CD4-positive, alpha-beta memory T cell (primary cell): ENCODE measurements at regions of chr10 and their contacts with region 1.

Region 1: DNA sequence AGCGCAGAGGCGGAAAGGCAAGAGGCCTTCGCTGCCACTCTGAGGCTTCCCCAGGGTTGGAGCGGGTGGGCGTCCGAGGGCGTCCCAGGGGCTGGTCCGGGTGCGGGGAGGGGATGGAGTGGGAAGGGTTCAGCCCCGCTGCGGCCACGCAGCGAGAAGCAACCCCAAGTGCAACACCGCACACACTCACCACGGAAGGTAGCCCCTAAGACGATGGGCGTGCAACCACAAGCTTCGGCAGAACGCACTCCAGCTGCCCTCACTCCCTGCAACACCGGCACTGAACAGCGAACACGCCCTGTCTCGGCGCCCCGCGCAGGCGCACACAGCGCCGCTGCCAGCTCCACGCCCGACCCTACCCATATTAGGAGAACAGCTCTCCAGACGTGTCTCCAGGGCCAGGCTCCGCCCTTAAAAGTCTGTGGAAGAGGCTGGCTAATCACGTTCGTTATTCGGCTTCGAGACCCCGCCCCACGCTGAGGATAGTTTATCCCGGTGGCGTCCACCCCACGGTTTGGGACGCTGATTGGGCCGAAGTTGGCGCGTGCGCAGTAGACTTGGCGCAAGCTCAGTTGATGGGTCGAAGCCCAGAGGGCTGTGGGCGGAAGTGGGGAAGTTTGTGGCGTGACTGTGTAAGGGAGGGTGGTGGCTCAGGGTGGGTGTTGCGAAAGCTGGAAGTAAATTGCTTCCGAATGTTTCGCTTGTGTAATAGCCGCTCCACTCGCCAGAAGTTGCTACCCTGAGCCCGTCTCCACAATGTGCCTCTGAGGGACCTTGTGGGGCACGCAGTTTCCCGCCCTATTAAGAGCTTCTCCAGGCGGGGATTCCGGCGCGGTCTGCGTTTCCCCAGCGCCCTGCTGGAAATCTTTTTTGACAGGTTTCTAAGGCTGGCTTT is at the start of gene RSU1:
- DNase-seq: peak; percentile 100
- H3K4me3 ChIP-seq: peak within 1 kb of the TSS; percentile 58 to 70
- H3K4me3 Mint-ChIP-seq: peak within 1 kb of the TSS; percentile 95 to 99 (median 97)
- H3K27ac ChIP-seq: peak within 1 kb of the TSS; percentile 78
- H3K27ac Mint-ChIP-seq: peak within 1 kb of the TSS; percentile 88 to 98 (median 96)
- H3K4me1 ChIP-seq: peaks cover 37% of the 10 kb centered on the region
- H3K4me1 Mint-ChIP-seq: peaks cover 24 to 55% (median 35%) of the 10 kb centered on the region in 4 donors
- H3K27me3 ChIP-seq: no peaks in the 10 kb centered on the region
- H3K27me3 Mint-ChIP-seq: no peaks in the 10 kb centered on the region
- total RNA-seq, gene RSU1: 53.6 to 54.7 TPM

Region 2: DNA sequence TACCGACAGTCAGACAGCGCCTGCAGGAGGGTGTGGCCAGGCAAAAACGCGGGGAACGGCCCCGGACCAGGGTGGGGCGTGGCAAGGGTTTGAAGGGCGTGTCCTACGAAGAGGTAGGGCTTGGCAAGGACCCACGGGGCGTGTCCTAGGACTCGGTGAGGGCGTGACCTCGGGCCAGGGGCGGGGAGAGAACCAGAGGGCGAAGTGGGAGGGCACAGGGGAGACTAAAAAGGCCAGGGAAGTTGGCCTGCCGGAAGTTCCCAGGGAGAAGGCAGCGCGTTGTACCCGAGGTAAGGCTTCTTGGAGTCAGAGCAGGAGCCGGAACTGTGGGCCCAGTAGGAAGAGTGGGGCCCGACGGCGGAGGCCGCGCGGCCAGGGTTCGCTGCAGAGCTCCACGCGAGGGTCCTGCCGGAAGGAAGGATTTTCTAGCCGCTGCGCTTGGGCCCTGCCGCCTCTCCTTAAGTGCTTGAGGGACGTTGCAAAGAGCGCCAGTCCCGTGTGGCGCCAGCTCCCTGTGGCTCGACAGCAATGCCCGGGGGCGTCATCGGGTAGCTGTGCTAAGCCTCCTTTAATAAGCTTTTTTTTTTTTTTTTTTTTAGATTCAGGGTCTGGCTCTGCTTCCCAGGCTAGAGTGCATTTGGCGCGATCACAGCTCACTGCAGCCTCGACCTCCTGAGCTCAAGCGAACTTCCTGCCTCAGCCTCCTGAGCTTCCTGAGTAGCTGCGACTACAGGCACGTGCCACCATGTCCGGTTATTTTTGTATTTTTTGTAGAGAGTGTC is 380.4 kb before region 1 on chr10 and contains the start of gene PTER:
- CTCF ChIA-PET with region 1: interaction called, 4 read pairs
- POLR2A ChIA-PET with region 1: interaction called, 21 read pairs
- intact Hi-C with region 1: loop called (anchors 2 kb)
- DNase-seq: peak; percentile 94 to 96 (median 95)
- H3K4me3 ChIP-seq: peak within 1 kb of the TSS; percentile 63 to 65
- H3K4me3 Mint-ChIP-seq: peak within 1 kb of the TSS; percentile 88 to 97 (median 93)
- H3K27ac ChIP-seq: peak within 1 kb of the TSS; percentile 65
- H3K27ac Mint-ChIP-seq: peak within 1 kb of the TSS; percentile 85 to 96 (median 95)
- H3K4me1 ChIP-seq: peaks cover 52% of the 10 kb centered on the region
- H3K4me1 Mint-ChIP-seq: peaks cover 35 to 58% (median 48%) of the 10 kb centered on the region in 4 donors
- H3K27me3 ChIP-seq: no peaks in the 10 kb centered on the region
- H3K27me3 Mint-ChIP-seq: no peaks in the 10 kb centered on the region
- total RNA-seq, gene PTER: 24.1 to 26.5 TPM

Region 3: GRCh38 chr10:16828114-16828568 is 10.8 kb after region 1 on chr10:
- CTCF ChIA-PET with region 1: interaction called, 20 read pairs
- POLR2A ChIA-PET with region 1: interaction called, 6 read pairs
- intact Hi-C with region 1: no loop called
- DNase-seq: peak; percentile 67 to 73 (median 71)
- H3K4me3 ChIP-seq: no peak overlapping the region
- H3K4me3 Mint-ChIP-seq: no peak overlapping the region
- H3K27ac ChIP-seq: no peak overlapping the region
- H3K27ac Mint-ChIP-seq: peak overlapping the region in 5 of 7 donors; percentile 15 to 88 (median 68)
- H3K4me1 ChIP-seq: no peaks in the 10 kb centered on the region
- H3K4me1 Mint-ChIP-seq: peaks cover 2 to 6% (median 5%) of the 10 kb centered on the region in 4 donors
- H3K27me3 ChIP-seq: no peaks in the 10 kb centered on the region
- H3K27me3 Mint-ChIP-seq: no peaks in the 10 kb centered on the region

Region 4: DNA sequence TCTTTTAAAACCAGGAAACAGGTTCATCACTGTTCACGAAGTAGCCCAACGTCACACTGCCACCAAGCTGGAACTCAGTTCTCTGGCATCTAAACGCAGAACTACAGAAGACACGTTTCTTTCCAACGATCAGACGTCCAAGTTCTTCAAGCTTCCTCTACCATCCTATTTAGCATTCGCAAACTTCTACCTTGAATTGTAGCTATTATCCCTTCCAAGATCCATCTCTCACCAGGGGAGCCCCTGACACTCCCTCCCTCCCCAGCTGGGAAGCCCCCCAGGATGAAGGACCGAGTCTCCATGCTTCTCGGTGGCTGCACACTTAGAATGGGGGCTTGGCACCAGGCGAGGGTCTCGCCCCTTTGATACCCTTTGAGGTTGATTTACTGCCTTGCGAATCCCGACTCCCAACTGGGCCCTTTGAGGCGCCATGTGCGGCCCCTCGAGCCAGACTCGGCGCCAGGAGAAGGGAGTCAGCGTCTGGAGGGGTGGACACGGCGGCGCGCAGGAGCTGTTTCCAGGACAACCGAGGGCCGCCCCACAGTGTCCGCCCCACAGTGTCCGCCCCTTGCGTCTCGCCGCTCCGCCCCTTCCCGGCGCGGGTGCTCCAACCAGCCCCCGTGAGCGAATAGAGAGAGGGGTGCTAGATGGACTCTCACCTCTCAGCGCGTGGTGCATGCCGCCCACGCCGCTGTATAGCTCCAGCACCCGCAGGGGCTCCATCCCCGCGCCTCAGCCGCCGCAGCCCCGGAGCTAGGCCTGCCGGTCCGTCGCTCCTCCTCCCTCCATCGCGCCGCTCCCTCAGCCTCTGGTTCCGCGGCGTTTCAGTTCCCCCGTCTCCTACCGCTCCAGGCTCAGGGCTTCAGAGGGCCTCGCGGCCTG is 383.8 kb after region 1 on chr10 and contains the start of gene TRDMT1:
- CTCF ChIA-PET with region 1: no interaction called
- POLR2A ChIA-PET with region 1: interaction called, 13 read pairs
- intact Hi-C with region 1: loop called (anchors 5 kb)
- DNase-seq: peak; percentile 79 to 84 (median 80)
- H3K4me3 ChIP-seq: peak within 1 kb of the TSS; percentile 72 to 89
- H3K4me3 Mint-ChIP-seq: peak within 1 kb of the TSS; percentile 91 to 98 (median 95)
- H3K27ac ChIP-seq: peak within 1 kb of the TSS; percentile 95
- H3K27ac Mint-ChIP-seq: peak within 1 kb of the TSS; percentile 98 to 99 (median 99)
- H3K4me1 ChIP-seq: peaks cover 27% of the 10 kb centered on the region
- H3K4me1 Mint-ChIP-seq: peaks cover 22 to 56% (median 40%) of the 10 kb centered on the region in 4 donors
- H3K27me3 ChIP-seq: no peaks in the 10 kb centered on the region
- H3K27me3 Mint-ChIP-seq: no peaks in the 10 kb centered on the region
- total RNA-seq, gene TRDMT1: 20.2 to 21.3 TPM

Region 5: DNA sequence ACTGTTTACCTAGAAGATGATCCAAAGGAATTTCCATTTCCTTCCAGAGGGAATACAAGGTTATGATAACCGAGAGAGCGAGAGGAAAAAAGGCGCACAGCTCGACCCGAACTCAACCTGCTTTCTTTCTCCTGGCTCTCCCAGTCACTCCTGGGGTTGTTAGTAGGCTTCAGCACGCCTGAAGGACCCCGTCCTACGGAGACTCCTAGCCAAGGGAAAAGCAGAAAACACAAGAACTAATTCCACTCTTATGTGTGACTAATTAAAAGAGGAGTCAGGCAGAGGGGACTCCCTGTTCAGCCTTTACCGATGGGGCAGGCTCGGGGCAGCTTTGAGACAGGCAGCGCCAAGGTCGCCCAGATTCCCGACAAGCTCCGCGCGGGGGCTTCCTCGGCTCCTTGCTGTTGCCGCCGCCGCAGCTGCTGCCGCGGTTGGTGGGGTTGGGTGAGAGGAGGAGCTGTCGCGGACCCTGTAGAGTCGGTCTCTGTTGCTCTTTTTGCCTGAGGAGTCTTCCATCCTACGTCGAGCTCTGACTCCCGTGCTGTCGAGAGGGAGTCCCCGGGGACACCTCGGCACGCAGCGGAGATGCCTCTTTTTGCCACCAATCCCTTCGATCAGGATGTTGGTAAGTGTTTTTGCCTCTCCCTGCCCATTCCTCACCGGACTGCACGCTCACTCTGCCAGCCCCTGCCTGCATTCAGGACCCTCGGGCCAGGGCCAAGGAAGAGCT is 826.5 kb after region 1 on chr10 and contains the start of gene STAM:
- CTCF ChIA-PET with region 1: no interaction called
- POLR2A ChIA-PET with region 1: interaction called, 8 read pairs
- intact Hi-C with region 1: loop called (anchors 1 kb)
- DNase-seq: peak; percentile 95 to 96 (median 96)
- H3K4me3 ChIP-seq: peak within 1 kb of the TSS; percentile 82 to 91
- H3K4me3 Mint-ChIP-seq: peak within 1 kb of the TSS; percentile 95 to 99 (median 98)
- H3K27ac ChIP-seq: peak within 1 kb of the TSS; percentile 93
- H3K27ac Mint-ChIP-seq: peak within 1 kb of the TSS; percentile 100
- H3K4me1 ChIP-seq: peaks cover 53% of the 10 kb centered on the region
- H3K4me1 Mint-ChIP-seq: peaks cover 40 to 69% (median 50%) of the 10 kb centered on the region in 4 donors
- H3K27me3 ChIP-seq: no peaks in the 10 kb centered on the region
- H3K27me3 Mint-ChIP-seq: no peaks in the 10 kb centered on the region
- total RNA-seq, gene STAM: 31.7 to 34.0 TPM